ENCODE measurements at regions of chr6 and their contacts with region 1.

Region 1: GRCh38 chr6:131488780-131489179 is 84.2 kb upstream of the ARG1 start:
- DNase-seq: no peak
- ATAC-seq: no peak
- H3K4me3 ChIP-seq: no peak overlapping the region
- H3K4me3 Mint-ChIP-seq: no peak overlapping the region
- H3K27ac ChIP-seq: no peak overlapping the region
- H3K27ac Mint-ChIP-seq: no peak overlapping the region
- H3K4me1 ChIP-seq: no peaks in the 10 kb centered on the region
- H3K4me1 Mint-ChIP-seq: no peaks in the 10 kb centered on the region
- H3K27me3 ChIP-seq: peaks cover 0 to 6% of the 10 kb centered on the region in 2 experiments
- H3K27me3 Mint-ChIP-seq: no peaks in the 10 kb centered on the region

Region 2: DNA sequence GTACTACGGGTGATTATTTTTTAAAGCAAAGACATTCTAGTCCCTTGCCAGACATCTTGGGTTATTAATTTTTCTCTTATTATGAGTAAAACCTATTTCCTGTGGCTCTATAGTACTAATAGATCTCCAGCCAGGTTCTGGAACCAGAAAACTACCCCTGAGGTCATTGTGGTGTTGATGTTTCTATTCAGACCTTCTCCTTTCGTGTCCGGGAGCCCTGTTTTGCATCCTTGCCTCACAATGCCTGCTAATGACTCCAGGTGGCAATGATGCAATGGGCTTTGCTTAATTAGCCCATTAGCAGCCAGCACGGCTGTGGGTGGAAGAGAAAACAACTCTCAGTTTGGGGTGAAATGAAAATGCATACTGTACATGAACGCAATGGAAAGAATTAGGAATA is 21.3 kb after region 1 on chr6:
- CTCF ChIA-PET with region 1: interaction called, 3 to 12 read pairs
- POLR2A ChIA-PET with region 1: no interaction called
- DNase-seq: no peak
- ATAC-seq: no peak
- H3K4me3 ChIP-seq: no peak overlapping the region
- H3K4me3 Mint-ChIP-seq: no peak overlapping the region
- H3K27ac ChIP-seq: no peak overlapping the region
- H3K27ac Mint-ChIP-seq: no peak overlapping the region
- H3K4me1 ChIP-seq: no peaks in the 10 kb centered on the region
- H3K4me1 Mint-ChIP-seq: no peaks in the 10 kb centered on the region
- H3K27me3 ChIP-seq: no peaks in the 10 kb centered on the region
- H3K27me3 Mint-ChIP-seq: no peaks in the 10 kb centered on the region

Measured in T-cell (primary cell).